Heart left ventricle (tissue), 16 donors: ENCODE measurements at regions of chr6 and their contacts with region 1.

Region 1: DNA sequence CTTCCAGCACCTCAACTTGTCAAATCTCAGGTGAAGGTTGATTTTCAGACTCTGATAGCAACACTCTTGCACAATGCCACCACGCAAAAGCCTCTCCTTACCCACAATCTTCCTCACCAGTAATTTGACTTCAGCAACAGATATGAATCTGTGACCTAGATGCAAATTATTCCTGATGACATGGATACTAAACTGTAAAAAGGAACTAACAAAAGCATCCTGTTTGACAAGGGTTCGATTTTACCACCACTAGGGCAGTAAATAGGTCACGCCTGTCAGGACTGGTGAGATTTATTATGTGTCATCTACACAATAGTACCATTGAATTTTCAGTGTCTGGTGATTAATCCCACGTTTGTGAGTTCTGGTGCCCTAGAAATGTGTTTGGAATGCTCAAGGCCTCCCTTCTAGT is 134.5 kb upstream of the COL21A1 start:
- DNase-seq: no peak
- ATAC-seq: no peak
- H3K4me3 ChIP-seq: no peak overlapping the region
- H3K27ac ChIP-seq: no peak overlapping the region
- H3K4me1 ChIP-seq: peaks cover 0 to 25% (median 0%) of the 10 kb centered on the region in 12 donors
- H3K27me3 ChIP-seq: no peaks in the 10 kb centered on the region
- CTCF ChIP-seq: no peak
- POLR2A ChIP-seq: no peak

Region 2: DNA sequence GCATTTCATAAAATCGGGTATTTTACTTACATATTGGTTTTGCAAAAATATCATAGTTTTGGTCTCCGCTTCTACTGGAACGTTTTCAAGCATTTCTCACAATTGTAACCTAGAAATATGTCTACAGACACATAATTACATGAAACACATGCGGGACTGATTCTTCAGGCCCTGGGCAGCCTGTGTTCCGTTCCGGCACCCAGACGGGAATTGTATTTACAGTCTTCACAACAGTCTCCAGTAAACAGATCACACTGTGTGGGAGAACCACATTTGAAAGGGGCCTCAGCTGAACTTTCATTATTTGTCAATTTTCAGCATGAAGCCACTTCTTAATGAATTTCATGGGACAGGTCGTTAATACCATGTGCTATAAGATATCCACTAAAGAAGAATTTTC is 64.0 kb after region 1 on chr6:
- intact Hi-C with region 1: loop called in 3 of 10 experiments (anchors 5 to 10 kb)
- DNase-seq: no peak
- ATAC-seq: peak; percentile 51 to 88 (median 81)
- H3K4me3 ChIP-seq: no peak overlapping the region
- H3K27ac ChIP-seq: peak overlapping the region in 7 of 12 donors; percentile 17 to 56 (median 23)
- H3K4me1 ChIP-seq: peaks cover 0 to 31% (median 8%) of the 10 kb centered on the region in 12 donors
- H3K27me3 ChIP-seq: no peaks in the 10 kb centered on the region
- CTCF ChIP-seq: no peak
- POLR2A ChIP-seq: no peak